ENCODE measurements at regions of chr19 and their contacts with region 1.

Region 1: GRCh38 chr19:21141787-21142464 is at the start of gene ZNF431:
- DNase-seq: peak; percentile 83 to 87 (median 84)
- H3K4me3 ChIP-seq: peak within 1 kb of the TSS; percentile 56 to 92 (median 69)
- H3K4me3 Mint-ChIP-seq: peak within 1 kb of the TSS; percentile 97 to 98
- H3K27ac ChIP-seq: peak within 1 kb of the TSS; percentile 84 to 94
- H3K27ac Mint-ChIP-seq: peak within 1 kb of the TSS; percentile 96 to 99 (median 98)
- H3K4me1 ChIP-seq: peaks cover 7 to 9% of the 10 kb centered on the region in 2 donors
- H3K4me1 Mint-ChIP-seq: peaks cover 13% of the 10 kb centered on the region
- H3K27me3 ChIP-seq: no peaks in the 10 kb centered on the region
- H3K27me3 Mint-ChIP-seq: peaks cover 0 to 2% (median 0%) of the 10 kb centered on the region in 3 donors
- CTCF ChIP-seq: no peak
- polyA plus RNA-seq, gene ZNF431: 1.8 to 9.8 (median 4.6) TPM

Region 2: GRCh38 chr19:21082011-21082975 is 59.6 kb before region 1 on chr19 and contains the start of gene ZNF714:
- intact Hi-C with region 1: loop called in 1 of 2 experiments (anchors 2 kb)
- DNase-seq: peak; percentile 71 to 80 (median 78)
- H3K4me3 ChIP-seq: peak within 1 kb of the TSS; percentile 57 to 90 (median 86)
- H3K4me3 Mint-ChIP-seq: peak within 1 kb of the TSS; percentile 97
- H3K27ac ChIP-seq: peak within 1 kb of the TSS; percentile 80 to 91
- H3K27ac Mint-ChIP-seq: peak within 1 kb of the TSS; percentile 88 to 99 (median 98)
- H3K4me1 ChIP-seq: peaks cover 0 to 7% of the 10 kb centered on the region in 2 donors
- H3K4me1 Mint-ChIP-seq: peaks cover 6% of the 10 kb centered on the region
- H3K27me3 ChIP-seq: no peaks in the 10 kb centered on the region
- H3K27me3 Mint-ChIP-seq: no peaks in the 10 kb centered on the region
- CTCF ChIP-seq: no peak
- polyA plus RNA-seq, gene ZNF714: 1.7 to 5.8 (median 2.4) TPM

Region 3: DNA sequence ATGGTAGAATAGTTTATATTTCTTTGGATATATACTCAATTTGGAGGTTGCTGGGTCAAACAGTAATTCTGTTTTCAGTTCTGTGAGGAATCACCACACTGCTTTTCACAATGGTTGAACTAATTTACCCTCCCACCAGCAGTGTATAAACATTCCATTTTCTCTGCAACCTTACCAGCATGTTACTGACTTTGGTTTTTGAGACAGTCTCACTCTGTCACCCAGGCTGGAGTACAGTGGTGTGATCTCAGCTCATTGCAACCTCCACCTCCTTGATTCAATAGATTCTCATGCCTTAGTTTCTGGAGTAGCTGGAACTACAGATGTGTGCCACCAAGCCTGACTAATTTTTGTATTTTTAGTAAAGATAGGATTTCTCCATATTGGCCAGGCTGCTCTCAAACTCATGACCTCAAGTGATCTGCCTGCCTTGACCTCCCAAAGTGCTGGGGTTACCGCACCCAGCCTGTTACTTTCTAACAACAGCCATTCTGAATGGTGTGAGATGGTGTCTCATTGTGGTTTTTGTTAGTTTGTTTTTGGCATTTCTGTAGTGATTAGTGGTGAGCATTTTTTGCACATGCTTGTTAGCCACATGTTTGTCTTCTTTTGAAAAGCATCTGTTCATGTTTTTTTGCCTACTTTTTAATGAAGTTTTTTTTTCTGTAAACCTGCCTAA is 47.4 kb before region 1 on chr19:
- intact Hi-C with region 1: no loop called
- DNase-seq: no peak
- H3K4me3 ChIP-seq: no peak overlapping the region
- H3K4me3 Mint-ChIP-seq: no peak overlapping the region
- H3K27ac ChIP-seq: no peak overlapping the region
- H3K27ac Mint-ChIP-seq: no peak overlapping the region
- H3K4me1 ChIP-seq: no peaks in the 10 kb centered on the region
- H3K4me1 Mint-ChIP-seq: no peaks in the 10 kb centered on the region
- H3K27me3 ChIP-seq: no peaks in the 10 kb centered on the region
- H3K27me3 Mint-ChIP-seq: no peaks in the 10 kb centered on the region
- CTCF ChIP-seq: no peak

Region 4: DNA sequence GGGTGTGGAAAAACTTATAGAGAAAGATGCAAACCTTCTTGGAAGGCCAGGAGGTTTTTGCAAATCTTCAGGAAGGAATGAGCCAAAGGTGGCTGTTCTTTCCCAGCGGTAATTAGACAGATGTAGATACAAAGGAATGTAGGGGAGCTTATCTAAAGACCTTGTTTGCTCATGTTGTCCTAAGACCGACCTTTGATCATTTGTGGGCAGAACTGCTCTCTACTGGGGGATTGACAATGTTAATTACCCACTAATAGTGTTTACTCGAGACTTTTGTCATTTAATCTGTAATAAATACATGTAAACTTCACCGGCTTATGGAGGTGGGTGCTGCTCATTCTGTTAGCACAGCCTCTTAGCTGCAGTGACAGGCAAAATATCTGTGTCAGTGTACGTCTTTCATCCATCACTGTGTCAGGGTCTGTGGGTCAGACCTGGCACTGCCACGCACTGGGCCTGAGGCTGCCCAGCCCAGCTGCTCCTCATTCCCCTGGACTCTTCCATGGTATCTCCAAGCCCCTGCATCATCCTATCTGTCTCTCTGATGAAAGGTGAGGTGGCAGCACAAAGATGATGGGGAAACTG is 68.2 kb after region 1 on chr19:
- intact Hi-C with region 1: no loop called
- DNase-seq: no peak
- H3K4me3 ChIP-seq: no peak overlapping the region
- H3K4me3 Mint-ChIP-seq: no peak overlapping the region
- H3K27ac ChIP-seq: no peak overlapping the region
- H3K27ac Mint-ChIP-seq: no peak overlapping the region
- H3K4me1 ChIP-seq: no peaks in the 10 kb centered on the region
- H3K4me1 Mint-ChIP-seq: no peaks in the 10 kb centered on the region
- H3K27me3 ChIP-seq: no peaks in the 10 kb centered on the region
- H3K27me3 Mint-ChIP-seq: peaks cover 0 to 2% (median 0%) of the 10 kb centered on the region in 3 donors
- CTCF ChIP-seq: no peak

Region 5: GRCh38 chr19:21314676-21315075 is 172.8 kb after region 1 on chr19:
- intact Hi-C with region 1: loop called in 1 of 2 experiments (anchors 10 kb)
- DNase-seq: peak; percentile 75 to 91 (median 79)
- H3K4me3 ChIP-seq: peak overlapping the region in 1 of 3 experiments; percentile 31
- H3K4me3 Mint-ChIP-seq: peak overlapping the region in 1 of 2 donors; percentile 28
- H3K27ac ChIP-seq: peak overlapping the region; percentile 9 to 86
- H3K27ac Mint-ChIP-seq: peak overlapping the region in 6 of 7 donors; percentile 43 to 92 (median 80)
- H3K4me1 ChIP-seq: peaks cover 16 to 27% of the 10 kb centered on the region in 2 donors
- H3K4me1 Mint-ChIP-seq: peaks cover 22% of the 10 kb centered on the region
- H3K27me3 ChIP-seq: no peaks in the 10 kb centered on the region
- H3K27me3 Mint-ChIP-seq: no peaks in the 10 kb centered on the region
- CTCF ChIP-seq: no peak